Caco-2 (cell line): ENCODE measurements at regions of chr16 and their contacts with region 1.

Region 1: DNA sequence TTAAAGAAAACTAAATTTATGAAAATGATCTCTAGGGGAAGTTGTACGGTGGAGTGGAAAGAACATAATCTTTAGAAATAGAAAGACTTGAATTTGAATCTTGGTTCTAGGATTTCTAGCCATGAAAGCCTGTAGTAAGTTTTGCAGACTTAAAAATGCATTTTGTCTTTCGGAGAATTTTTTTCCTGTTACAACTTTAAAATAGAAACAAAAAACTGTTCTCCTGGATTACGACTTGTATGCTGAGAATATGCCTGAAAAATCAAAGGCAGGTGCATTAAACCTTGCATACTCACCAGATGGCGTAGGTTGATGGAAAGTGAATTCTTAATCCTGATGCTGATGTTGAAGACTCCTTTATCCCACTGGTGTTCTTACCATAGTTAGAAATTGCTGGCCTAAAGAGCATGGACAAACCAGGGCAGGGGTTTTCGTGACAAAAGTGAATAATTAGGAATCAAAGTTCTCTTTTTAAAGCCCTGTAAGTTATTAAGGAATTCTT is 7.6 kb upstream of the MPHOSPH6 start:
- DNase-seq: no peak
- H3K4me3 ChIP-seq: no peak overlapping the region
- H3K4me3 Mint-ChIP-seq: no peak overlapping the region
- H3K27ac Mint-ChIP-seq: no peak overlapping the region
- H3K4me1 ChIP-seq: no peaks in the 10 kb centered on the region
- H3K4me1 Mint-ChIP-seq: no peaks in the 10 kb centered on the region
- H3K27me3 ChIP-seq: no peaks in the 10 kb centered on the region; the same call in 1 of the 2 replicates
- H3K27me3 Mint-ChIP-seq: peaks cover 24% of the 10 kb centered on the region
- CTCF ChIP-seq: no peak

Region 2: GRCh38 chr16:82229796-82230619 is 52.4 kb after region 1 on chr16:
- CTCF ChIA-PET with region 1: no interaction called
- POLR2A ChIA-PET with region 1: interaction called, 4 read pairs
- intact Hi-C with region 1: loop called (anchors 5 kb)
- DNase-seq: peak; percentile 77 to 84
- H3K4me3 ChIP-seq: no peak overlapping the region
- H3K4me3 Mint-ChIP-seq: no peak overlapping the region
- H3K27ac Mint-ChIP-seq: no peak overlapping the region
- H3K4me1 ChIP-seq: no peaks in the 10 kb centered on the region
- H3K4me1 Mint-ChIP-seq: no peaks in the 10 kb centered on the region
- H3K27me3 ChIP-seq: no peaks in the 10 kb centered on the region
- H3K27me3 Mint-ChIP-seq: peaks cover 9% of the 10 kb centered on the region
- CTCF ChIP-seq: peak; percentile 97 to 98